ENCODE measurements at regions of chrX and their contacts with region 1.

Region 1: GRCh38 chrX:39439906-39440798 is 638.9 kb downstream of the MID1IP1 start:
- DNase-seq: no peak
- H3K4me3 ChIP-seq: no peak overlapping the region
- H3K27ac ChIP-seq: no peak overlapping the region
- H3K4me1 ChIP-seq: no peaks in the 10 kb centered on the region
- H3K27me3 ChIP-seq: peaks cover 0 to 67% of the 10 kb centered on the region in 2 donors
- CTCF ChIP-seq: no peak
- POLR2A ChIP-seq: no peak

Region 2: GRCh38 chrX:40539214-40540142 is 1099.3 kb after region 1 on chrX:
- intact Hi-C with region 1: loop called (anchors 5 kb)
- DNase-seq: peak in 1 of 2 donors; percentile 33
- H3K4me3 ChIP-seq: no peak overlapping the region
- H3K27ac ChIP-seq: peak overlapping the region in 1 of 2 donors; percentile 52
- H3K4me1 ChIP-seq: no peaks in the 10 kb centered on the region
- H3K27me3 ChIP-seq: peaks cover 0 to 75% of the 10 kb centered on the region in 2 donors
- CTCF ChIP-seq: no peak
- POLR2A ChIP-seq: no peak